ENCODE measurements at regions of chr6 and their contacts with region 1.

Region 1: DNA sequence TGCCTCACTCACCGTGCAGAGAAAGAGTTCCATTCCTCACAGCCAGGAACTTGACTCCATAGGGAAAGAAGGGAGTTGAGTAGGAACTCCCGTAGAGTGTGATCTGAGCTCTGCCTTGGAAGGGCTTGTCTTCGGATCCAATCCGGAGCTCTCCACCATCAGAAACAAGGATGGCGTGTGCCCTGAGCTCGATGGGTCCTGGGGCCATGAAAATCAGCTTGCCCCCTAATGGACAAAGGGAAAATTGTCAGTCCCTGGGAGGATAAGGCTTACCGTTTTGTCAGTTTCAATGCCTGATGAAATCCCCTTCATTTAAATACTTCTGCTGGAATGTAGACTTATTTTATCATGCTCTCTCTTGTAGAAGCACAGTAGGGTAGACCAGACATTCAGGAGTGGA is 153.3 kb downstream of the PKHD1 start:
- DNase-seq: peak; percentile 49
- ATAC-seq: peak; percentile 90
- H3K4me3 Mint-ChIP-seq: no peak overlapping the region
- H3K27ac Mint-ChIP-seq: no peak overlapping the region
- H3K4me1 Mint-ChIP-seq: peaks cover 12% of the 10 kb centered on the region
- H3K27me3 Mint-ChIP-seq: no peaks in the 10 kb centered on the region; the same call in none of the 2 replicates
- CTCF ChIP-seq: peak; percentile 50

Region 2: GRCh38 chr6:51855310-51856082 is 78.6 kb before region 1 on chr6:
- CTCF ChIA-PET with region 1: interaction called, 13 read pairs
- POLR2A ChIA-PET with region 1: no interaction called
- DNase-seq: peak; percentile 23
- ATAC-seq: peak; percentile 94
- H3K4me3 Mint-ChIP-seq: no peak overlapping the region
- H3K27ac Mint-ChIP-seq: peak overlapping the region; percentile 68; the same call in 1 of the 2 replicates
- H3K4me1 Mint-ChIP-seq: peaks cover 17% of the 10 kb centered on the region
- H3K27me3 Mint-ChIP-seq: no peaks in the 10 kb centered on the region; the same call in 1 of the 2 replicates
- CTCF ChIP-seq: peak; percentile 58

Measured in WTC11 (cell line).